ENCODE measurements at regions of chrX and their contacts with region 1.

Region 1: DNA sequence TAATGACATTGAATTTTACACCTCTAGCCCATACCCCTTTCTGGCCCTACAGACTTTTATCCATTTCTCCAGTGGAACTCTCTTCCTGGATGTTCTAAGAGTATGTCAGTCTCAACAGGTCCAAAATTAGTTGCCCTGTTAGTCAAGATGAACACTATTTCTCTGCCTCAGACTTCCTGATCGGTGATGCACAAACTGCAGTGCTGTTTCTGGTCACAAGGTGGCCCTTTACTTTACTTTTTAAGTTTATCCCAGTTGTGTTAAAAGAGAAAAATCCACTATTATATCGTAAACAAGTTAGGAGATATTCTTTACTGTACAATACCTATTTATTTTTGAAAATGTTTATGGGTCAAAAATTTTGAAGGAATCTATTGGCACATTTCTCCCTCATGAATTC is 13.1 kb downstream of the TCEAL7 start:
- DNase-seq: peak; percentile 76
- H3K4me3 Mint-ChIP-seq: no peak overlapping the region
- H3K27ac Mint-ChIP-seq: no peak overlapping the region
- H3K4me1 Mint-ChIP-seq: peaks cover 3% of the 10 kb centered on the region
- H3K27me3 Mint-ChIP-seq: peaks cover 8% of the 10 kb centered on the region

Region 2: DNA sequence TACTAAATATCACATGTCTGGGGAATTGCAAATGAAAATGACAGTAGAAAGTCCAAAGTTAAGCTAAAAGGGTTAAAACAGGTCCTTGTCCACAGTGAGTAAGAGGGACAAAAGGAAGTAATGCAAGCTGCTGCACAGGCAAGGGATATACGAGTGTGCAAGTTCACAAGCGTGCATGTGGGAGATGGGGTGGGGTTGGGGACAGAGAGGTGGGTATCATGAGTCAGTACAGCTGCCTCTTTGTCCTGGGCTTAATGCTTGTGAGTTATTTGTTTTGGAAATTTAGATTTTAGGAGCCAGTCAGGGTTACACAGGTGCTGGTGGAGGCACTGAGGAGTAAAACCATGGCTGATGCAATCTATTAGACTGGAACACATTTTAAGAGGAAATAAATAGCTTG is 634.2 kb before region 1 on chrX:
- intact Hi-C with region 1: no loop called
- DNase-seq: no peak
- H3K4me3 Mint-ChIP-seq: no peak overlapping the region
- H3K27ac Mint-ChIP-seq: no peak overlapping the region
- H3K4me1 Mint-ChIP-seq: no peaks in the 10 kb centered on the region
- H3K27me3 Mint-ChIP-seq: peaks cover 20% of the 10 kb centered on the region

Region 3: DNA sequence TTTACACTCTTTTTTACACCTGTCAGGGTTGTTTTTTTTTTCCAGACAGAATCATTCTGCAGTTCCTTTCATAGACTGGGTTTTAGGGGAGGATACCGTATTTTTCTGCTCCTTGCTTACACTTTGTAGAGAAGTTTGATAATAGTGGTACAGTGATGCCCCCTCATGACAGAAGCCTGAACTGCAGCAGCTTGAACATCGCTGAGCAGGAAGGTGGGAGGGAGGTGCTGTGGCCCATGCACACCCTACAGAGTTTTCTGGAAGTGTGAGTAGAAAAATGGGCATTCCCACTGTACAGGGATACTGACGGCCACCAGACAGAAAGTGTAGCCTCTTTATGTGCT is 121.6 kb after region 1 on chrX:
- intact Hi-C with region 1: loop called (anchors 1 kb)
- DNase-seq: peak; percentile 92
- H3K4me3 Mint-ChIP-seq: peak overlapping the region; percentile 92
- H3K27ac Mint-ChIP-seq: no peak overlapping the region
- H3K4me1 Mint-ChIP-seq: peaks cover 8% of the 10 kb centered on the region
- H3K27me3 Mint-ChIP-seq: no peaks in the 10 kb centered on the region